ENCODE measurements at regions of chr22 and their contacts with region 1.

Region 1: DNA sequence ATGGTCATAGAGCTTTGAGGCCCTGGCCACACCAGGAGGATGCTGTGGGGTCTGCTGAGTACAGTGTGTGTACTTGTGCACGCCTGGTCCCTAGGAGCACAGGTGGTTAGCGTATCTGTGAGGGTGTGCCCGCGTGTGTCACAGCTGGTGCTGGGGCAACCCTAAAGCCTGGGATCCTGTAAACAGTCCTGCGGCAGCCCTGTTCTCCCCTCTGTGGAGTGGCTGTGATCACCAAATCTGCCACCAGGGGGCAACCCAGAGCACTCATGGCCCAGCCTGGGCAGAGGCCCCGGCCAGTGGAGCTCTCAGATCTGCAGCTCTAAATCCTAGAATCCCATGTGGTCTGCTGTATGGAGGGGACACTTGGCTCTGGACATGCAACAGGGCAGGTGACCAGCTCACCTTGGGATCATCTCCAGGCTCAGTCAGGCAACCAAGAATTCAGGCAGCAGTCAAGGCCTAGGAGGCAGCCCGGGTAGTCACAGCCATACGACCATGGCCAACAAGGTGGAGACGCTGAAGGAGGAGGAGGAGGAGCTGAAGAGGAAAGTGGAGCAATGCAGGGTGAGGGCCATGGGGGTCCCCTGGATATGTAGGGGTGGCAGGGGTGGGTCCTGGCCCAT is 3.9 kb downstream of the SH3BP1 start:
- DNase-seq: peak; percentile 75 to 84 (median 80)
- H3K4me3 ChIP-seq: no peak overlapping the region
- H3K4me3 Mint-ChIP-seq: peak overlapping the region; percentile 15 to 82 (median 58)
- H3K27ac ChIP-seq: peak overlapping the region; percentile 45
- H3K27ac Mint-ChIP-seq: peak overlapping the region; percentile 68 to 91 (median 88)
- H3K4me1 ChIP-seq: peaks cover 44% of the 10 kb centered on the region
- H3K4me1 Mint-ChIP-seq: peaks cover 16 to 49% (median 32%) of the 10 kb centered on the region in 4 donors
- H3K27me3 ChIP-seq: no peaks in the 10 kb centered on the region
- H3K27me3 Mint-ChIP-seq: no peaks in the 10 kb centered on the region

Region 2: GRCh38 chr22:37588546-37589215 is 54.7 kb before region 1 on chr22:
- CTCF ChIA-PET with region 1: interaction called, 12 read pairs
- POLR2A ChIA-PET with region 1: interaction called, 3 read pairs
- intact Hi-C with region 1: no loop called
- DNase-seq: no peak
- H3K4me3 ChIP-seq: no peak overlapping the region
- H3K4me3 Mint-ChIP-seq: no peak overlapping the region
- H3K27ac ChIP-seq: no peak overlapping the region
- H3K27ac Mint-ChIP-seq: peak overlapping the region in 1 of 7 donors; percentile 55
- H3K4me1 ChIP-seq: peaks cover 6% of the 10 kb centered on the region
- H3K4me1 Mint-ChIP-seq: peaks cover 9 to 14% (median 11%) of the 10 kb centered on the region in 4 donors
- H3K27me3 ChIP-seq: no peaks in the 10 kb centered on the region
- H3K27me3 Mint-ChIP-seq: peaks cover 11 to 12% of the 10 kb centered on the region in 2 donors

Region 3: GRCh38 chr22:37623075-37624016 is 20.0 kb before region 1 on chr22:
- CTCF ChIA-PET with region 1: interaction called, 493 read pairs
- POLR2A ChIA-PET with region 1: interaction called, 247 read pairs
- intact Hi-C with region 1: loop called (anchors 1 kb)
- DNase-seq: peak; percentile 72 to 79 (median 75)
- H3K4me3 ChIP-seq: no peak overlapping the region
- H3K4me3 Mint-ChIP-seq: peak overlapping the region in 7 of 8 donors; percentile 9 to 85 (median 60)
- H3K27ac ChIP-seq: peak overlapping the region; percentile 52
- H3K27ac Mint-ChIP-seq: peak overlapping the region; percentile 92 to 97 (median 94)
- H3K4me1 ChIP-seq: peaks cover 52% of the 10 kb centered on the region
- H3K4me1 Mint-ChIP-seq: peaks cover 19 to 53% (median 37%) of the 10 kb centered on the region in 4 donors
- H3K27me3 ChIP-seq: no peaks in the 10 kb centered on the region
- H3K27me3 Mint-ChIP-seq: no peaks in the 10 kb centered on the region

Region 4: GRCh38 chr22:37658133-37659065 is 15.1 kb after region 1 on chr22 and contains the start of gene PDXP:
- CTCF ChIA-PET with region 1: interaction called, 221 read pairs
- POLR2A ChIA-PET with region 1: interaction called, 168 read pairs
- intact Hi-C with region 1: loop called (anchors 2 kb)
- DNase-seq: peak; percentile 98
- H3K4me3 ChIP-seq: peak within 1 kb of the TSS; percentile 27 to 57
- H3K4me3 Mint-ChIP-seq: peak within 1 kb of the TSS; percentile 82 to 94 (median 86)
- H3K27ac ChIP-seq: peak within 1 kb of the TSS; percentile 63
- H3K27ac Mint-ChIP-seq: peak within 1 kb of the TSS; percentile 85 to 98 (median 93)
- H3K4me1 ChIP-seq: peaks cover 33% of the 10 kb centered on the region
- H3K4me1 Mint-ChIP-seq: peaks cover 29 to 49% (median 37%) of the 10 kb centered on the region in 4 donors
- H3K27me3 ChIP-seq: no peaks in the 10 kb centered on the region
- H3K27me3 Mint-ChIP-seq: no peaks in the 10 kb centered on the region
- total RNA-seq, gene PDXP: 7.3 to 9.8 TPM

Region 5: DNA sequence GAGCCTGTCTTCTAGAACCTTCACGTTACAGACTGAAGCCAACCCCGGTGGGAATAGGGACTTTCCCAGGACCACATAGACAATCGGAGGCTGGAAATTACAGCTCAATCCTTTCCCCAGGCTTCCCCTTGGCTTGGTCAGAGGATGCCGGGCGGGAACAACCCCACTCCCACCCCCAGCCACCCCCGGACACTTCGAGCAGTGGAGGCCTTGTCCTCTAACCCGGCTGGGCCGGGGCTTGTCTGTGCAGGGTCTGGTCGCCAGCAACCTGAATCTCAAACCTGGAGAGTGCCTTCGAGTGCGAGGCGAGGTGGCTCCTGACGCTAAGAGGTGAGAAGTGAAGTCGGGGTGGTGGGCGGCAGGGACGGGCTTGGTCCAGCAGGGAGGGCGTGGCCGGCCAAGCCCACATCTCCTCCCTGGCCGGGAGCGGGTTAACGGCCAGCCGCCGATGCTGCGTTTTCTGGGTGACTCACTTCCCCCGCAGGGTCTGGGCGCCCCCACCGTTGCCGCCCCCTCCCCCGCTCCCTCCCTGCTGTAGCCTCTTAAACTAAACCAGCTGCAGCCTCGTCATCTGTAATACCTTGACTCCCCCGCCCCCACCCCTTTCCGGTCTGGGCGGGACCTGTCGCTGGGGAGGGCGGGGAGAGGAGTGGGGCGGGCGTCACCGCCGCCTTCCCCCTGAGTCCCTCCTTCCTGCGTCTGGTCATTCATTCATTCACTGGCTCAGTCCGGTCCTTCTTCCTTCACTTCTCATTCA is 33.6 kb after region 1 on chr22:
- CTCF ChIA-PET with region 1: interaction called, 558 read pairs
- POLR2A ChIA-PET with region 1: interaction called, 185 read pairs
- intact Hi-C with region 1: loop called (anchors 1 kb)
- DNase-seq: peak; percentile 92 to 97 (median 93)
- H3K4me3 ChIP-seq: peak overlapping the region; percentile 62 to 95
- H3K4me3 Mint-ChIP-seq: peak overlapping the region; percentile 88 to 99 (median 94)
- H3K27ac ChIP-seq: peak overlapping the region; percentile 87
- H3K27ac Mint-ChIP-seq: peak overlapping the region; percentile 96 to 100 (median 100)
- H3K4me1 ChIP-seq: peaks cover 48% of the 10 kb centered on the region
- H3K4me1 Mint-ChIP-seq: peaks cover 29 to 80% (median 46%) of the 10 kb centered on the region in 4 donors
- H3K27me3 ChIP-seq: no peaks in the 10 kb centered on the region
- H3K27me3 Mint-ChIP-seq: no peaks in the 10 kb centered on the region

Region 6: DNA sequence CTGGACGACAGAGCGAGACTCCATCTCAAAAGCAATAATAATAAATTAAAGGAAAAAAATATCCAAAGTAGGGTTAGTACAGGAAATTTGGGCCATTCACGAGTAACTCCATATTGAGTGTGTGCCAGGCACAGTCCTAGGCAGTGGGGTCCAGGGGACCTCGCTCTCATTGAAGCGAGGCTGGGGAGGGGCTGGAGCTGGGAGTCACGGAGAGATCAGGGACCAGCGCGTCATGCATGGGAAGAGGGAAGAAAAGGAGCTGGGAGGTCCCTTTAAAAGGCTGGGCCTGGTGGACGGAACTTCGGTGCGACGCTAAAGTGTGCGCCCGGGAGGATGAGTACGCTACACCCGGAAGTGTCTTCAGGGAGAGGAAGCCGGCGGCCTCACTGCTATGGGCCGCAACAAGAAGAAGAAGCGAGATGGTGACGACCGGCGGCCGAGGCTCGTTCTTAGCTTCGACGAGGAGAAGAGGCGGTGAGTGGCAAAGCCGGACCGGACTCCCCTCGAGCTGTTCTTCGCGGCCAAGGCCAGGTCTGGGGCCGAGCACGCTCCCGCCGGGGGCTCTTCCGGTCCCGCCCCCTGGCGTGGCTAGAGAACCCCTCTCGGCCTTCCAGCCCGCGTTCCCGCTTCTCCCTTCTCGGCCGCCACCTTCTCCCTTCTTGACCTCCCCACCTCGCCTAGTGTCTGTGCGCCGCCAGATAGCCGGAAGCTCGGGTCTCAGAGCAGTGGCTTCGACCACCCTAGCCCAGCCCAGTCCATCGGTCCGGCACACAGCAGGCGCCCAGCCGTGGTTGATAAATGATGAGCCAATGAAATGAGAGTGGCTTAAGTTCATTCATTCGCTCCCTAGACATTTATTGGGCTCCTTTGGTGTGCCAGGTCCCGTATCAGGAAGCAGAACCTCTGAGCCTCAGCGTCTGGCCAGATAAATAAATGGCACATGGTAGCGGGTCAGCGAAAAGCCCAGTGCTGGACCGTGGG is 43.0 kb after region 1 on chr22 and contains the start of gene NOL12:
- CTCF ChIA-PET with region 1: interaction called, 558 read pairs
- POLR2A ChIA-PET with region 1: interaction called, 30 read pairs
- intact Hi-C with region 1: loop called (anchors 1 kb)
- DNase-seq: peak; percentile 76 to 82 (median 77)
- H3K4me3 ChIP-seq: peak within 1 kb of the TSS; percentile 79 to 96
- H3K4me3 Mint-ChIP-seq: peak within 1 kb of the TSS; percentile 91 to 98 (median 96)
- H3K27ac ChIP-seq: peak within 1 kb of the TSS; percentile 92
- H3K27ac Mint-ChIP-seq: peak within 1 kb of the TSS; percentile 91 to 98 (median 95)
- H3K4me1 ChIP-seq: peaks cover 25% of the 10 kb centered on the region
- H3K4me1 Mint-ChIP-seq: peaks cover 16 to 34% (median 25%) of the 10 kb centered on the region in 4 donors
- H3K27me3 ChIP-seq: no peaks in the 10 kb centered on the region
- H3K27me3 Mint-ChIP-seq: no peaks in the 10 kb centered on the region
- total RNA-seq, gene NOL12: 50.3 to 52.0 TPM

Region 7: GRCh38 chr22:37696657-37697537 is 53.6 kb after region 1 on chr22 and contains the start of gene TRIOBP:
- CTCF ChIA-PET with region 1: no interaction called
- POLR2A ChIA-PET with region 1: no interaction called
- intact Hi-C with region 1: no loop called
- DNase-seq: peak; percentile 67 to 95 (median 77)
- H3K4me3 ChIP-seq: no peak within 1 kb of the TSS
- H3K4me3 Mint-ChIP-seq: peak within 1 kb of the TSS in 7 of 8 donors; percentile 6 to 81 (median 43)
- H3K27ac ChIP-seq: no peak within 1 kb of the TSS
- H3K27ac Mint-ChIP-seq: peak within 1 kb of the TSS in 5 of 7 donors; percentile 27 to 71 (median 55)
- H3K4me1 ChIP-seq: peaks cover 9% of the 10 kb centered on the region
- H3K4me1 Mint-ChIP-seq: peaks cover 10 to 18% (median 13%) of the 10 kb centered on the region in 4 donors
- H3K27me3 ChIP-seq: no peaks in the 10 kb centered on the region
- H3K27me3 Mint-ChIP-seq: no peaks in the 10 kb centered on the region
- total RNA-seq, gene TRIOBP: 25.8 to 26.1 TPM

Measured in CD4-positive, alpha-beta memory T cell (primary cell).